Prostate gland (tissue), 2 donors: ENCODE measurements at regions of chr5 and their contacts with region 1.

Region 1: DNA sequence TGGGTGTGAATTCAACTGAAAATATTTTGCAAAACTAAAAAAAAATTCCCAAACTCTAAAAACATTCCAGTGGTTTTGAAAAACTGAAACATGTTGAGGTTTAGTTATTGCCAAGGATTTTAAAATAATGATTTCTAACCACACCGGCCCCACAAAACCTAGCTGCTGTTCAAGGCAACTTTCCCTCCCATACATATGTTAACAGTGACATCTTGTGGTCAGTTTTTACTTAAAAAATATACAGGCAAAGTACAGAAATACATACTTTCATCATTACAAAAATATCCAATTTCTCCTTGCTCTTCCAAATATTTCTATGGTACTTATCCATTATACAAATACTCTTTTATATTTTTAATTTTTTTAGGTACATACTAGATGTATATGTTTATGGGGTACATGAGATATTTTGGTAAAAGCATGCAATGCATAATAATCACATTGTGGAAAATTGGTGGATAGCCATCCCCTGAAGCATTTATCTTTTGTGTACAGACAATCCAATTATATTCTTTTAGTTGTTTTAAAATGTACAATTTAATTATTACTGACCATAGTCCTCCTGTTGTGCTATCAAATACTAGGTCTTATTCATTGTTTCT is 34.4 kb upstream of the MRPS30 start:
- DNase-seq: no peak
- H3K4me3 ChIP-seq: no peak overlapping the region
- H3K27ac ChIP-seq: no peak overlapping the region
- H3K4me1 ChIP-seq: no peaks in the 10 kb centered on the region
- H3K27me3 ChIP-seq: no peaks in the 10 kb centered on the region
- CTCF ChIP-seq: peak; percentile 8 to 51 (median 49)
- POLR2A ChIP-seq: no peak

Region 2: GRCh38 chr5:43631182-43631910 is 1143.0 kb before region 1 on chr5:
- intact Hi-C with region 1: loop called (anchors 5 kb)
- DNase-seq: peak; percentile 34
- H3K4me3 ChIP-seq: no peak overlapping the region
- H3K27ac ChIP-seq: no peak overlapping the region
- H3K4me1 ChIP-seq: no peaks in the 10 kb centered on the region
- H3K27me3 ChIP-seq: no peaks in the 10 kb centered on the region
- CTCF ChIP-seq: peak in 3 of 4 experiments; percentile 40 to 61 (median 54)
- POLR2A ChIP-seq: no peak

Region 3: GRCh38 chr5:43729846-43730478 is 1044.4 kb before region 1 on chr5:
- intact Hi-C with region 1: loop called (anchors 5 kb)
- DNase-seq: no peak
- H3K4me3 ChIP-seq: no peak overlapping the region
- H3K27ac ChIP-seq: no peak overlapping the region
- H3K4me1 ChIP-seq: no peaks in the 10 kb centered on the region
- H3K27me3 ChIP-seq: no peaks in the 10 kb centered on the region
- CTCF ChIP-seq: peak; percentile 10 to 47 (median 40)
- POLR2A ChIP-seq: no peak

Region 4: DNA sequence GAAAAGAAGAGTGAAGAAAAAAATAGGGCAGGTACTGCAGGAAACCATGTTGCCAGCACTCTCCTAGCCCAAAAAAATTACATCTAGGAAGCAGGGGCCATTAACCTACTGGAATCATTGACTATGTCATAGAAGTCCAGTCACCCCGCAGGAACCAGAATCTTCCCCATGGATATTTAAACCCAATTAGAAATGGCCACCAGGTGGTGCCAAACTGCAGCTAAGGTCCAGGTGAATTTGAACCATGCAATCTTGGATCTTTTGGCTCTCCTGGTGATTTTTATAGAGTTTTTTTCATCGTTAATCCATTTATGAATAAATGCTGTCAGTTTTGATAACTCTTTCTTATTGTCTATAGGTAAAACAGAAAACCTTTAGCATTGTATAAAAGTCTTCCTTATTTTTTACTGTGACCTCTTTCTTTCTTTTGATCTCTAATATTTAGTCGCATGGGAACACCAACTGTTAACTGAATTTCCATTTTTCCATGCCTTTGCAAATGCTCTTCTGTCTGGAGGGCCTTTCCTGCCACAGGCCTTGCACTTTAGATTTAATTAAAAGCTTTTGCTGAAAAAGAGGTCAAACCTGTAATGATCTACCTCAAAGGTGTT is 237.6 kb before region 1 on chr5:
- intact Hi-C with region 1: loop called (anchors 5 kb)
- DNase-seq: no peak
- H3K4me3 ChIP-seq: no peak overlapping the region
- H3K27ac ChIP-seq: no peak overlapping the region
- H3K4me1 ChIP-seq: no peaks in the 10 kb centered on the region
- H3K27me3 ChIP-seq: no peaks in the 10 kb centered on the region
- CTCF ChIP-seq: peak in 3 of 4 experiments; percentile 21 to 53 (median 28)
- POLR2A ChIP-seq: no peak